Activated naive CD4-positive, alpha-beta T cell treated with anti-CD3 and anti-CD28 coated beads for 36 hours (primary cell): ENCODE measurements at regions of chr7 and their contacts with region 1.

Region 1: GRCh38 chr7:124322561-124322960 is 289.7 kb upstream of the TMEM229A start:
- DNase-seq: no peak
- H3K4me3 Mint-ChIP-seq: no peak overlapping the region
- H3K27ac Mint-ChIP-seq: no peak overlapping the region
- H3K4me1 Mint-ChIP-seq: no peaks in the 10 kb centered on the region
- H3K27me3 Mint-ChIP-seq: no peaks in the 10 kb centered on the region

Region 2: DNA sequence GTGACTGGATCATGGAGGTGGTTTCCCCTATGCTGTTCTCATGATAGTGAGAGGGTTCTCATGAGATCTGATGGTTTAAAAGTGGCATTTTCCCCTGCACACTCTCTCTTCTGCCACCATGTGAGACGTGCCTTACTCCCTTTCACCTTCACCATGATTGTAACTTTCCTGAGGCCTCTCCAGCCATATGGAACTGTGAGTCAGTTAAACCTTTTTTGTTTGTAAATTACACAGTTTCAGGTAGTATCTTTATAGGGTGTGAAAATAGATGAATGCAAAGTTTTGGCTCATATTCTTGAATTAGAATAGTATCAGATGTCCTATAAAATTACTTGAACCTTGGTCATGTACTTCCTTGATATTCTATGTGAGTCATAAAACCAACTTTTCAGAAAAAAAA is 37.6 kb before region 1 on chr7:
- CTCF ChIA-PET with region 1: no interaction called
- intact Hi-C with region 1: loop called (anchors 2 kb)
- DNase-seq: no peak
- H3K4me3 Mint-ChIP-seq: no peak overlapping the region
- H3K27ac Mint-ChIP-seq: no peak overlapping the region
- H3K4me1 Mint-ChIP-seq: no peaks in the 10 kb centered on the region
- H3K27me3 Mint-ChIP-seq: no peaks in the 10 kb centered on the region

Region 3: DNA sequence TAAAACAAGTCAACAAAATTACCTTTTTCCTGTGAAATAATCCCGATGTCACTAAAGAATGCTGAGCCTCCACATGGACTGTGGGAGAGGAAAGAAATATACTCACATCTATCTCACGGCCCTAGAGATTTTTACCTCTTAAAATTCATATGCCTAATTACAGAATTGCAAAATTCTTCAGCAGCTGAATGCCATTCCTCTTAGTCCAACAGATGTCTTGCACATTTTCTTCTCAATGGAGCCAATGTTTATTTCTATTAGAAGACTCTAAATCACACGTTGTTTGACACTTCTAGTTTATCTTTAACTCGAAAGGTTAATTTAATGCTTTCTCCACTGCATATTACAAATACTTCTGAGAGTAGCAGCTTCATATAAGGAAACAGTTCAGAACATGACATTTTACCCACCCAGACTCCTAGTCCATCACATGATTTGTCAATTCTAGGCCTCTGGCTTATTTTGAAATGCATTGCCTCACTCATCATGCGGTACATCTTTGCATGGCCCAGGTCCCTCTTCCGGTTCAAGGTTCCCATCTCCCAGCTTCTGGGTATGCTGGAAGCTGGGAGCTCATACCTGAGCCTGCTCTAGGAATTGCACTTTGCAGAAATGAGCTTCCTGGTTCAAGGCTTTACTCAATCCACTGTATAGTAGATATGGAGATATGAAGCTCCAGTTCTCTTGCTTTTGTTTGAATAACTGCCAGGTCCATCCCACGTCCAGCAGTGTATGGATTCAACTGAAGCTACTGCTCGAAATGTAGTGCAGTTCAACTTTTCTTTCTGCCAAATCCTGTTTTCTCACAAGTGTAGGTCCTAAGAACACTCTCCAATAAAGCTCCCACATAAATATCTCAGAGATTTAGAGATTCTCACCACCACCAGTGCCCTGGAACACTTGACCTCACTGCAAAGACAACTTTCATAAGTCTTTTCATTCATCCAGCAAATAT is 136.8 kb after region 1 on chr7:
- CTCF ChIA-PET with region 1: no interaction called
- intact Hi-C with region 1: no loop called
- DNase-seq: no peak
- H3K4me3 Mint-ChIP-seq: no peak overlapping the region
- H3K27ac Mint-ChIP-seq: no peak overlapping the region
- H3K4me1 Mint-ChIP-seq: no peaks in the 10 kb centered on the region
- H3K27me3 Mint-ChIP-seq: no peaks in the 10 kb centered on the region